Activated B cell treated with CpG ODN at 0.5 μM for 24 hours (primary cell): ENCODE measurements at regions of chr5 and their contacts with region 1.

Region 1: GRCh38 chr5:87121304-87122150 is 146.2 kb upstream of the RASA1 start:
- DNase-seq: no peak
- ATAC-seq: peak; percentile 82
- H3K4me3 Mint-ChIP-seq: peak overlapping the region; percentile 44
- H3K27ac Mint-ChIP-seq: peak overlapping the region; percentile 74
- H3K4me1 Mint-ChIP-seq: peaks cover 60% of the 10 kb centered on the region
- H3K27me3 Mint-ChIP-seq: no peaks in the 10 kb centered on the region
- CTCF ChIP-seq: no peak

Region 2: GRCh38 chr5:87103596-87104287 is 17.8 kb before region 1 on chr5:
- CTCF ChIA-PET with region 1: interaction called, 3 read pairs
- POLR2A ChIA-PET with region 1: interaction called, 4 read pairs
- intact Hi-C with region 1: loop called (anchors 1 kb)
- DNase-seq: no peak
- ATAC-seq: peak; percentile 99
- H3K4me3 Mint-ChIP-seq: peak overlapping the region; percentile 80
- H3K27ac Mint-ChIP-seq: peak overlapping the region; percentile 89
- H3K4me1 Mint-ChIP-seq: peaks cover 46% of the 10 kb centered on the region
- H3K27me3 Mint-ChIP-seq: no peaks in the 10 kb centered on the region
- CTCF ChIP-seq: no peak

Region 3: GRCh38 chr5:87138091-87138805 is 16.7 kb after region 1 on chr5:
- CTCF ChIA-PET with region 1: no interaction called
- POLR2A ChIA-PET with region 1: no interaction called
- intact Hi-C with region 1: loop called (anchors 2 kb)
- DNase-seq: no peak
- ATAC-seq: no peak
- H3K4me3 Mint-ChIP-seq: no peak overlapping the region
- H3K27ac Mint-ChIP-seq: no peak overlapping the region
- H3K4me1 Mint-ChIP-seq: peaks cover 12% of the 10 kb centered on the region
- H3K27me3 Mint-ChIP-seq: no peaks in the 10 kb centered on the region
- CTCF ChIP-seq: no peak

Region 4: GRCh38 chr5:87282269-87282668 is 160.7 kb after region 1 on chr5:
- CTCF ChIA-PET with region 1: no interaction called
- POLR2A ChIA-PET with region 1: no interaction called
- intact Hi-C with region 1: no loop called
- DNase-seq: no peak
- ATAC-seq: no peak
- H3K4me3 Mint-ChIP-seq: no peak overlapping the region
- H3K27ac Mint-ChIP-seq: no peak overlapping the region
- H3K4me1 Mint-ChIP-seq: peaks cover 32% of the 10 kb centered on the region
- H3K27me3 Mint-ChIP-seq: no peaks in the 10 kb centered on the region
- CTCF ChIP-seq: no peak